ENCODE measurements at regions of chr14 and their contacts with region 1.

Region 1: GRCh38 chr14:75769047-75769685 is 108.1 kb downstream of the TTLL5 start:
- DNase-seq: no peak
- H3K4me3 ChIP-seq: no peak overlapping the region
- H3K27ac ChIP-seq: no peak overlapping the region
- H3K4me1 ChIP-seq: no peaks in the 10 kb centered on the region
- H3K27me3 ChIP-seq: no peaks in the 10 kb centered on the region
- CTCF ChIP-seq: no peak

Region 2: GRCh38 chr14:75631453-75631831 is 137.7 kb before region 1 on chr14:
- CTCF ChIA-PET with region 1: no interaction called
- dilution Hi-C with region 1: no loop called
- in situ Hi-C with region 1: no loop called
- intact Hi-C with region 1: no loop called
- DNase-seq: no peak
- H3K4me3 ChIP-seq: no peak overlapping the region
- H3K27ac ChIP-seq: no peak overlapping the region
- H3K4me1 ChIP-seq: no peaks in the 10 kb centered on the region
- H3K27me3 ChIP-seq: no peaks in the 10 kb centered on the region
- CTCF ChIP-seq: no peak

Region 3: DNA sequence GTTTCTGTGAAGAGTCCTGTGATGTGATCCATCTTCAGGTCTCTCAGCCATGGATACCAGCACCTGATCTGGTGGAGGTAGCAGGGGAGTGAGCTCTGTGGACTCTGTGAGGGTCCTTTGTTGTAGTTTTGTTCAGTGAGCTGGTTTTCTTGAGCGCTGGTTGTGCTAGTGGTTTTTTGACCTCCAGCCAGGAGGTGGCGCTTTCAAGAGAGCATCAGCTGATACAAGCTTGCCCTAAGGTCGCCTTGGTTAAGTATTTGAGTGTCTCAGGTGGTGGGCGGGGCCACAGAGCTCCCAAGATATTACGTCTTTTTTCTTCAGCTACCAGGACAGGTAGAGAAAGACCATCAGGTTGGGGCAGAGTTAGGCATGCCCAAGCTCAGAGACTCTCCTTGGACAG is 31.6 kb after region 1 on chr14:
- CTCF ChIA-PET with region 1: no interaction called
- dilution Hi-C with region 1: loop called (anchors 5 kb)
- in situ Hi-C with region 1: no loop called
- intact Hi-C with region 1: no loop called
- DNase-seq: no peak
- H3K4me3 ChIP-seq: no peak overlapping the region
- H3K27ac ChIP-seq: no peak overlapping the region
- H3K4me1 ChIP-seq: no peaks in the 10 kb centered on the region
- H3K27me3 ChIP-seq: no peaks in the 10 kb centered on the region
- CTCF ChIP-seq: no peak

Measured in mammary epithelial cell (primary cell).